GM18951 (cell line): ENCODE measurements at regions of chr20 and their contacts with region 1.

Region 1: DNA sequence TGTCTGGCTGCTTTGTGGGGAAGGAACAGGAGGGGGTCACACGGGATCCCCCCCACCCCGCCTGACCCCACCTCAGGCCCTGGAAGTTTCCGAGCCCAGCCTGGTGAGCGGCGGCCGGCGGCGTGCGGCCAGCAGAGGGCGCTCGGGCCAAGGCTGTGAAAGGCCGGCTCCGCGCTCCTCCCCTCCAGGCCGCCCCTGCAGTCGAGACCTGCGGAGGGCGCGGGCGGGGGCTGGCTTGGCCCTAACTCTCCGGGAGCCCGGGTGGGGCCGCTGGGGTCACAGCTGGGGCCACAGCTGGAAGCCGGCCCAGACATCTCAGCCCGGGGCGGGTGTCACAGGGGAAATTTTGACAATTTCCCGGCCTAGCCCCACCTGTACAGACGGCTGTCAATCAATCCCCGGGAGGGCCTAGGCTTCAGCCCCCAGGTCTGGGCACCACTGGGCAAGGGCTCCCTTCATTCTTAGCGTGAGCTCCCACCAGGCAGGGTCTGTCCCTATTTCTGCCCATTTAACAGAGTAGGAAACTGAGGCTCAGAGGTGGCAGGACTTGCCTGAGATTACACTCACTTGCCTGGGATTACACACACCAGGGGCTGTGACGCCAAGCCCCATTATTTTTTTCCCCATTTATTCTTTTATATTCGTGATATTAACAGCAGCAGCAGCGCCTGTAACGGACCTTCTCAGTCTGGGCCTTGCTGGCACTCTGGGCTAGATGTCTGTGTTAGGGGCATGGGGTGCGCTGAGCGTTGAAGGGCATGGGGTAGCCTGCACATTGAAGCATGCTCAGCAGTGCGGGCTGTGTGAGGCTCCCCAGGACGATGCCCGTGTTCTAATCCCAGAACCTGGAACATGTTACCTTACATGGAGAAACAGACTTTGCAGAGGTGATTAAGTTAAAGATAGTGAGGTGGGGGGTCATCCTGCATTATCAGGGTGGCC is 23.0 kb downstream of the ZBP1 start:
- POLR2A ChIP-seq: no peak

Region 2: GRCh38 chr20:57391074-57391554 is 206.2 kb before region 1 on chr20 and contains the start of gene RBM38:
- in situ Hi-C with region 1: loop called (anchors 10 kb)
- POLR2A ChIP-seq: peak; percentile 90

Region 3: GRCh38 chr20:57522380-57522993 is 74.8 kb before region 1 on chr20:
- in situ Hi-C with region 1: loop called (anchors 5 kb)
- POLR2A ChIP-seq: no peak

Region 4: GRCh38 chr20:57638173-57638894 is 41.1 kb after region 1 on chr20:
- in situ Hi-C with region 1: no loop called
- POLR2A ChIP-seq: no peak

Region 5: GRCh38 chr20:58179432-58180099 is 582.3 kb after region 1 on chr20:
- in situ Hi-C with region 1: loop called (anchors 10 kb)
- POLR2A ChIP-seq: no peak